Mammary epithelial cell (primary cell): ENCODE measurements at regions of chr9 and their contacts with region 1.

Region 1: GRCh38 chr9:104264431-104264830 is 170.3 kb downstream of the SMC2 start:
- DNase-seq: no peak
- H3K4me3 ChIP-seq: no peak overlapping the region
- H3K27ac ChIP-seq: no peak overlapping the region
- H3K4me1 ChIP-seq: no peaks in the 10 kb centered on the region
- H3K27me3 ChIP-seq: no peaks in the 10 kb centered on the region
- CTCF ChIP-seq: no peak

Region 2: DNA sequence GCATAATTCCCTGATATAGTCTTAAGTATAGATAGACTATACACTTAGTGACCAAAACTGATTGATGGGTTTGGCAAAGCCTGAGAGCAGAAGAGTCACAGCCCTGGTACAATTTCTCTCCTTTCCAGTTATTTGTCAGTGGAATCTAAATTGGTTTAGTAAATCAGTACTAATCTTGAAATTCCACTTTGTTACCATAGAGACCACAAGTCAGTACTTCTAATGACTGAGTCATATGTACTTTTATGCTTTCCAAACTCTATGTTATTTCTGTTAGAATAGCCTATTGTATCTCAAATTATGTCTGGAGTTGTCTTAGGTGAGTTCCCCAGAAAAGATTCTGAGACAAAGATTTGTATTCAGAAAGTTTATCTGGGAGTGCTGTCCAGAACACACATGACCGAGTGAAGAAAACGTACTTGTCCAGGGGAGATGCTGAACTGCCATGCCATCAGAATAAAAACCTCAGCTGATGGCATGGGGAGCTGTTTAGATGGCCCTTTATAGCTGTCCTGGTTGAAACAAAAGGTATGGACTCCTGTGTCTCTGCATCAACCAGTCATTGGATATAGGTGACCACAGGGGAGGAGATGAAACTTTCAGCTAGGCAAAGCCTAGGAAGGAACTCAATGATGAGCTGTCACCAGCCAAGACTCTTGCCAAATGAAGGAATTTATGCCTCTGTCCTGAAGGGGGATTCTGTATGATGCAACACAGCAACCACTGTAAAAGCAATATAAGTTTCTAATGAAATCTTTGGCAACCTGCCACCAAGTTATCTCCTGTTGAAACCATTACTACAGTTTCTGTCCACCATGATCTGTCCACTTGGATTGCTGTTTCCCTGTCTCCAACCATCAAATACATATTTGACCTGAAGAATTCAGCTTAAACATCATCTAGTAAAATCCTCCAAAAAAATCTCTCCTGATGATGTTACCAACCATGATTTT is 188.4 kb before region 1 on chr9:
- CTCF ChIA-PET with region 1: no interaction called
- dilution Hi-C with region 1: no loop called
- in situ Hi-C with region 1: no loop called
- intact Hi-C with region 1: no loop called
- DNase-seq: peak; percentile 91
- H3K4me3 ChIP-seq: peak overlapping the region in 2 of 3 experiments; percentile 11 to 12
- H3K27ac ChIP-seq: peak overlapping the region; percentile 98
- H3K4me1 ChIP-seq: peaks cover 36% of the 10 kb centered on the region
- H3K27me3 ChIP-seq: no peaks in the 10 kb centered on the region
- CTCF ChIP-seq: peak in 1 of 2 donors; percentile 22

Region 3: GRCh38 chr9:104144336-104144735 is 120.1 kb before region 1 on chr9:
- CTCF ChIA-PET with region 1: interaction called, 14 read pairs
- dilution Hi-C with region 1: no loop called
- in situ Hi-C with region 1: no loop called
- intact Hi-C with region 1: no loop called
- DNase-seq: peak; percentile 22
- H3K4me3 ChIP-seq: no peak overlapping the region
- H3K27ac ChIP-seq: no peak overlapping the region
- H3K4me1 ChIP-seq: no peaks in the 10 kb centered on the region
- H3K27me3 ChIP-seq: no peaks in the 10 kb centered on the region
- CTCF ChIP-seq: no peak

Region 4: GRCh38 chr9:104279535-104280190 is 15.2 kb after region 1 on chr9:
- CTCF ChIA-PET with region 1: no interaction called
- dilution Hi-C with region 1: no loop called
- in situ Hi-C with region 1: no loop called
- intact Hi-C with region 1: no loop called
- DNase-seq: peak; percentile 12
- H3K4me3 ChIP-seq: no peak overlapping the region
- H3K27ac ChIP-seq: no peak overlapping the region
- H3K4me1 ChIP-seq: peaks cover 2% of the 10 kb centered on the region
- H3K27me3 ChIP-seq: no peaks in the 10 kb centered on the region
- CTCF ChIP-seq: no peak

Region 5: DNA sequence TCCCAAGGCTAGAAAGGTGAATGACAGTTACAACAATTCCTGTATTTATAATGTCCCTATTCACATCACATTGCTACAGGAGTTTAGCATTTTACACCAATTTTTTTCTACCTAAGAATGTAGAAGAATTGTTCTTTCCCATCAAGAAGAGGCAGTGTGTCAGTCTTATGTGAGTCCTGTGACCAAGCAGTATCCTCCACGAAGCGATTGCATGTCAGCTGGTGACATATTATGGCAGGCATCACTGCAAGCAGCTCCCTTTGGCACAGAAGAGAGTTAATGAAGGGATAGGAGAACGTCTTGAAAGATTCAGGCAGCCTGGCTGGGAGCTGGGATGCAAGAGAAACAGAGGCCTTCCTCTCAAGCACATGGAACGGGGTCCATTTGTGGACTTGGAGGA is 29.4 kb after region 1 on chr9:
- CTCF ChIA-PET with region 1: no interaction called
- dilution Hi-C with region 1: no loop called
- in situ Hi-C with region 1: no loop called
- intact Hi-C with region 1: no loop called
- DNase-seq: no peak
- H3K4me3 ChIP-seq: no peak overlapping the region
- H3K27ac ChIP-seq: no peak overlapping the region
- H3K4me1 ChIP-seq: no peaks in the 10 kb centered on the region
- H3K27me3 ChIP-seq: no peaks in the 10 kb centered on the region
- CTCF ChIP-seq: no peak